ENCODE measurements at regions of chr16 and their contacts with region 1.

Region 1: GRCh38 chr16:31081428-31082351 is 7.1 kb downstream of the PRSS53 start:
- DNase-seq: no peak
- H3K4me3 ChIP-seq: no peak overlapping the region
- H3K4me3 Mint-ChIP-seq: no peak overlapping the region
- H3K27ac Mint-ChIP-seq: no peak overlapping the region
- H3K4me1 ChIP-seq: no peaks in the 10 kb centered on the region
- H3K4me1 Mint-ChIP-seq: no peaks in the 10 kb centered on the region
- H3K27me3 ChIP-seq: no peaks in the 10 kb centered on the region
- H3K27me3 Mint-ChIP-seq: no peaks in the 10 kb centered on the region
- CTCF ChIP-seq: no peak

Region 2: DNA sequence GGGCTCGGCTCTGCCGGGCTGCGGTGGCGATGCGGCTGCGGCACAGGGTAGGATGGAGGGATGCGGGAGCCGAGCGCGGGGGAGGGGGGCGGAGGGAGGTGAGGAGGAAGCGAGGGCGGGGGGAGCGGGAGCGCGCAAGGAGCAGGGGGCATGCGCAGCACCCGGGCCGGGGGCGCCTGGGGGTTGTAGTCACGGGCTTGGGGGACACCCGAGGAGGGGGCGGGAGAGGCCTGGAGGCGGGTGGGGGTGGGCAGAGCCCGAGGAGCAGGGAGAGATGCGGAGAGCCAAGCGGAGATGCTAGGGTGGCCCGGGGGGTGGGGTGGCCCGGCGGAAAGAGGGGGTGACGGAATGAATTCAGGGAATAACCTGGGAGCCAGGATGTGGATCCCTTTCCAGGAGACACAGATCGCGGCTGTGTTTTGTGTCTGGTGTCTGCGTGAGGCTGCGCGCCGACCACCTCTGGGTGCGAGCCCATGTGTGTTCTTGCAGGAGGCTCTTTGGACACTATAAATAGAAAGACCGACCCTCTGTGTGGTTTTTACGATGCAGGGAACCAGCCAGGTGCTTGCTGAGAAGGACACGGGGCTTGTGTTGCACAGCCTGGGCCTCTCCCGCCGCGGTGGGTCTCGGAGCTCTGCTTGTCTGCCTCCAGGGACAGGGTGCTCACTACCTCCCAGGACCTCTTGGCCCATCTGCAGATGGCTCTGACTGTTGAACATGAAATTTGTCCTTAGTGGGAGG is 70.9 kb before region 1 on chr16 and contains the start of gene STX1B:
- CTCF ChIA-PET with region 1: no interaction called
- POLR2A ChIA-PET with region 1: interaction called, 17 read pairs
- intact Hi-C with region 1: no loop called
- DNase-seq: no peak
- H3K4me3 ChIP-seq: peak within 1 kb of the TSS; percentile 16
- H3K4me3 Mint-ChIP-seq: peak within 1 kb of the TSS; percentile 18
- H3K27ac Mint-ChIP-seq: no peak within 1 kb of the TSS
- H3K4me1 ChIP-seq: no peaks in the 10 kb centered on the region
- H3K4me1 Mint-ChIP-seq: peaks cover 9% of the 10 kb centered on the region
- H3K27me3 ChIP-seq: no peaks in the 10 kb centered on the region
- H3K27me3 Mint-ChIP-seq: peaks cover 15% of the 10 kb centered on the region
- CTCF ChIP-seq: no peak
- total RNA-seq, gene STX1B: 0.46 and 0.77 TPM in 2 replicates

Measured in Caco-2 (cell line).